ENCODE measurements at regions of chr14 and their contacts with region 1.

Region 1: GRCh38 chr14:22570132-22570949 is 18.7 kb downstream of the DAD1 start:
- DNase-seq: peak; percentile 89
- ATAC-seq: peak; percentile 80
- H3K4me3 Mint-ChIP-seq: peak overlapping the region; percentile 90
- H3K27ac Mint-ChIP-seq: peak overlapping the region; percentile 100
- H3K4me1 Mint-ChIP-seq: peaks cover 79% of the 10 kb centered on the region
- H3K27me3 Mint-ChIP-seq: no peaks in the 10 kb centered on the region

Region 2: DNA sequence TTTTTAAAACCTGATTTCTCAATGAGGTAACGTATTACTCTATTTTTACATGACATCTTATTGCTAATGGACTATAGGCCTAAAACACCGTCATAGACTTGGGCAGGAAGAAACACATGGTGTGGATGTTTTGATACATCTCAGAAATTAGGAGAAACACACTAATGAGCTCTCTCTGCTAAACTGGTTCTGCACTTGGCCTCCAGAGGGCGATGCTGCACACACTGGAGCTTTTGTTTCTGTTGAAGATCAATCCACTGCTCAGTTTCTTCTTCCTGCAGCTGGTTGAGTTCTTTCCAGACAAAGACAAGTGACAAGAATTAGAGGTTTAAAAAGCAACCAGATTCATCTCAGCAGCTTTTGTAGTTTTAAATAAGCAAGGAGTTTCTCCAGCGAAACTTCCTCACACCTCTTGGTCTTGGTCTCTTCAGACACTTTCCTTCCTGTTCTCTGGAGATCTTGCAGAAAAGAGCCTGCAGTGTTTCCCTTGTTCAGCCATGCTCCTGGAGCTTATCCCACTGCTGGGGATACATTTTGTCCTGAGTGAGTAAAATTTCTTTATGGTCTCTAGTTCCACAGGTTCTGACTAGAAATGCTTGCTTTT is 718.2 kb before region 1 on chr14:
- CTCF ChIA-PET with region 1: interaction called, 17 read pairs
- POLR2A ChIA-PET with region 1: no interaction called
- intact Hi-C with region 1: no loop called
- DNase-seq: peak; percentile 87
- ATAC-seq: peak; percentile 73
- H3K4me3 Mint-ChIP-seq: peak overlapping the region; percentile 69
- H3K27ac Mint-ChIP-seq: peak overlapping the region; percentile 81
- H3K4me1 Mint-ChIP-seq: peaks cover 14% of the 10 kb centered on the region
- H3K27me3 Mint-ChIP-seq: peaks cover 8% of the 10 kb centered on the region

Region 3: DNA sequence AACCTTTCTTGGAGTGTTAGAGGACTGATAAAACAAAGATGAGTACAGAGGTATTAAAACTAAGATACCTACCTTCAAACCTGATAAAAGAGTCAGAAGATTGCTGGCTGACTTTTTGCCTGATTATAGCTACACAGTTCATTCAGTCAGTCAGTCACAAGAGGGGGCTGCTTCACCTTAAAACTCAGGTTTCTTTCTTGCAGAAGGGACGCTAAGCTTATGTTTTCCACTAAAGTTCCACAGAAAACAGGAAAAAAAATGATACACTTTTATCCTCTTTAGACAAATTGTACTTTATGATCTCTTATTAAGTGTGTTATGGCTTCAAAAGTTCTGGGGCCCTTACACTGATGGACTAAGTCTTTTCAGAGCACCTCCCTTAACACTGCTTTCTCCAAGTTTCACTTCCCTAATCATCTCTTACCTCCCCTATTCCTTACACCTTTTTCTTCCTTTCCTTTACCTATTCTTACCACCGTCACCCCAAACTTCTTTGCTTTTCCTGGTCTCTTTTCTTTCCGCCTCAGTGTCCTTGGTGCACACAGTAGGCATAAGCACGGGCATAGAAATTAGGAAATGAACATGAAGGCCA is 448.0 kb before region 1 on chr14:
- CTCF ChIA-PET with region 1: interaction called, 10 read pairs
- POLR2A ChIA-PET with region 1: no interaction called
- intact Hi-C with region 1: no loop called
- DNase-seq: peak; percentile 33
- ATAC-seq: no peak
- H3K4me3 Mint-ChIP-seq: peak overlapping the region; percentile 77
- H3K27ac Mint-ChIP-seq: peak overlapping the region; percentile 92
- H3K4me1 Mint-ChIP-seq: peaks cover 13% of the 10 kb centered on the region
- H3K27me3 Mint-ChIP-seq: no peaks in the 10 kb centered on the region

Region 4: GRCh38 chr14:22531451-22532344 is 38.6 kb before region 1 on chr14:
- CTCF ChIA-PET with region 1: interaction called, 15 read pairs
- POLR2A ChIA-PET with region 1: interaction called, 4 read pairs
- intact Hi-C with region 1: loop called in 1 of 2 experiments (anchors 5 kb)
- DNase-seq: peak; percentile 60
- ATAC-seq: peak; percentile 70
- H3K4me3 Mint-ChIP-seq: peak overlapping the region; percentile 84
- H3K27ac Mint-ChIP-seq: peak overlapping the region; percentile 100
- H3K4me1 Mint-ChIP-seq: peaks cover 87% of the 10 kb centered on the region
- H3K27me3 Mint-ChIP-seq: no peaks in the 10 kb centered on the region

Region 5: DNA sequence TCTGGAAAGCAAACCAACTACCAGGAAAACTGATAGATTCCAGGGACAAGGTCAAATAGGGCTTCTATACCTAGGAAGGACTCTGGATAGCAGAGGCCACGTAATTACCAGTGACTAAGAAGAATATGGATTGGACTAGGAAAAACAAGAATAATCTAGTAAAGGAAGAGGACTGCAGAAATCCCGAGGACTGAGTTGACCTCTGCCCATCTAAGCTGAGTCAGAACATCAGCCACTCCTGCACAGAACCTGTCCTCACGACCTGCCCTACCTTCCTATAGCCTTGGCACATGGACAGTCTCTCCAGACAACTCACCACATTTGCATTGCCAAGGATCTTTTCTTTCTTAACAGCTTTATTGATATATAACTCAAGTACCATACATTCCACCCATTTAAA is 71.5 kb after region 1 on chr14:
- CTCF ChIA-PET with region 1: interaction called, 6 read pairs
- POLR2A ChIA-PET with region 1: no interaction called
- intact Hi-C with region 1: loop called in 1 of 2 experiments (anchors 2 kb)
- DNase-seq: no peak
- ATAC-seq: no peak
- H3K4me3 Mint-ChIP-seq: no peak overlapping the region
- H3K27ac Mint-ChIP-seq: no peak overlapping the region
- H3K4me1 Mint-ChIP-seq: peaks cover 8% of the 10 kb centered on the region
- H3K27me3 Mint-ChIP-seq: no peaks in the 10 kb centered on the region

Region 6: DNA sequence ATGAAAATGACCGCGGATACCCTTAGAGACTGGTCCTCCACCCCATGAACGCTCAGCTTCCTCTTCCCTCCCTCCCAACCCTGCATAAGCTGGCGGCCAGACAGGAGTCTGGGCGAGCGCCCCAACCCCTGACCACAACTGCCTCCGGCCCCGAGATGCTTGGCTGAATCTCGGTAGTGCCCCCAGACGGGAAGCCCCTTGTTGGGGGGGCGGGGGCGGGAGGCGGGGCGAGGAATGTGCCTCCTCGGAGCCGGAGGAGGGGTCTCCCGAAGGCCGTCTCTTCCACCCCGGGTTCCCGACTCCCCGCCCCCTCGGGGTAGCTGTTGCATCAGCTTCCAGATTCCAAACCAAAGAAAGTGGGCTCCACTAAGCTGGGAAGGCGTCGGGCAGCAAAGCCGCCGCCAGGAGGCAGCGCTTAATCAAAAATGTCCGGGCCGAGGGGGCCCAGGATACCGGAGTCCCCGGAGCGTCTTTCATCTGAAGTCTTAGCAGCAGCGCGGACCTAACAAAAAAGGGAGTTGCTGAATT is 252.3 kb after region 1 on chr14:
- CTCF ChIA-PET with region 1: interaction called, 27 read pairs
- POLR2A ChIA-PET with region 1: no interaction called
- intact Hi-C with region 1: loop called (anchors 2 kb)
- DNase-seq: peak; percentile 80
- ATAC-seq: peak; percentile 75
- H3K4me3 Mint-ChIP-seq: peak overlapping the region; percentile 55
- H3K27ac Mint-ChIP-seq: peak overlapping the region; percentile 25
- H3K4me1 Mint-ChIP-seq: peaks cover 27% of the 10 kb centered on the region
- H3K27me3 Mint-ChIP-seq: peaks cover 5% of the 10 kb centered on the region

Region 7: GRCh38 chr14:22872033-22872832 is 301.9 kb after region 1 on chr14:
- CTCF ChIA-PET with region 1: interaction called, 19 read pairs
- POLR2A ChIA-PET with region 1: interaction called, 7 read pairs
- intact Hi-C with region 1: no loop called
- DNase-seq: peak; percentile 84
- ATAC-seq: peak; percentile 13
- H3K4me3 Mint-ChIP-seq: peak overlapping the region; percentile 88
- H3K27ac Mint-ChIP-seq: peak overlapping the region; percentile 91
- H3K4me1 Mint-ChIP-seq: peaks cover 37% of the 10 kb centered on the region
- H3K27me3 Mint-ChIP-seq: no peaks in the 10 kb centered on the region